Activated CD4-positive, alpha-beta memory T cell treated with anti-CD3 and anti-CD28 coated beads for 36 hours (primary cell): ENCODE measurements at regions of chr12 and their contacts with region 1.

Region 1: DNA sequence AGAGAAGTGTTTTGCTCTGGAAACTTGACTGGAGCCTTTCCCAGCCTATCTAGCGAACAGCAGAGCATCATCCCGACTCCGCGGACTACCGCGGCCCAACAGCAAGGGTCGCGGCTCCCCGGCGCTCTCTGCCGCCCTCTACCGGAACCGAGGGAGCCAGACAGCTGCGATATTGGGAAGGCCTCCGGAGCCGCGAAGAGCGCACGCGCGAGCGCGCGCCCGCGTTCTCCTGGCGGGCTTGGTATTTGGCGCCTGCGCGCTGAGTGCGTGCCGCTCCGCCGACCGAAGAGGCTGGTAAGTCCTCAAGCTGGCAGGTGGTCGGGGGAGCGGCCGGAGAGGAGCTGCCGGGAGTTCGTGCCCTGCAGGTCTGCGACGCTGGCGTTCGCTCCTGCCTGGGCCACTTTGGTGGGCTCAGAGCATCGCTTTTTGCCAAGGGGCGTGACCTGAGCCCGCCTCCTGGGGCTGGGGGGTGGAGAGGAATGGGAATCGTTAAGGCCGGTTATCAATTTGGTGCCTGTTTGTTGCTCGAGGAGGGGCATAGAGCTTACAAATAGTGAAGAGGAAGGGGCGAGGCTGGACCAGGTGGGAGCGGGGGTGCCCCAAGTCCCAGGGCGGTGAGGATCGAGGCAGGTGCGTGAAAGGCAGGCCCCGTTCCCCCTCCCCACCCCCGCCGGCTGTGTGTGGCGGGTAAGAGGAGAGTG is at the start of gene TMEM106C:
- DNase-seq: peak; percentile 94
- H3K4me3 Mint-ChIP-seq: peak within 1 kb of the TSS; percentile 98
- H3K27ac Mint-ChIP-seq: peak within 1 kb of the TSS; percentile 81
- H3K4me1 Mint-ChIP-seq: peaks cover 34% of the 10 kb centered on the region
- H3K27me3 Mint-ChIP-seq: peaks cover 5% of the 10 kb centered on the region
- total RNA-seq, gene TMEM106C: 179 to 182 TPM

Region 2: DNA sequence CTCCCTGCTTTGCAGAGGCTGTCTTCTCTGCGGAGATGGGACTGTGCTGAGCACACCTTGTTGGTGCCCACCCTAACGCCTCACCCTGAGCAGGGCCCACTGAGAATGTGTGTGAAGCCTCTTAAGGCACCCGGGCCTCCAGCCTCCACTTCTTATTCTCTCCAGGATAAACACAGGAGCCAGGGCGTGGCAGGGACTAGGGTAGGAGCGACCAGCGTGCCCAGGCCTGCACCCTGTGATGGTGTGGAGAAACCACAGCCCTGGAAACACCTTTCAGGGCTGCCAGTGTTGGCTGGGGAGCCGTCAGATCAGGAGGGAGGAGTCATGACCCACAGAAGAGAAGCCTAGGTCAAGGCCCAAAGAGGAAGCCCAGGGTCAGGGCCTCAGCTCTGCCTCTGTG is 100.0 kb before region 1 on chr12:
- CTCF ChIA-PET with region 1: interaction called, 4 read pairs
- POLR2A ChIA-PET with region 1: no interaction called
- intact Hi-C with region 1: loop called (anchors 2 kb)
- DNase-seq: no peak
- H3K4me3 Mint-ChIP-seq: no peak overlapping the region
- H3K27ac Mint-ChIP-seq: peak overlapping the region; percentile 54
- H3K4me1 Mint-ChIP-seq: peaks cover 86% of the 10 kb centered on the region
- H3K27me3 Mint-ChIP-seq: no peaks in the 10 kb centered on the region

Region 3: GRCh38 chr12:47889040-47889439 is 74.5 kb before region 1 on chr12:
- CTCF ChIA-PET with region 1: interaction called, 13 read pairs
- POLR2A ChIA-PET with region 1: interaction called, 5 read pairs
- intact Hi-C with region 1: loop called (anchors 1 kb)
- DNase-seq: peak; percentile 51
- H3K4me3 Mint-ChIP-seq: peak overlapping the region; percentile 64
- H3K27ac Mint-ChIP-seq: peak overlapping the region; percentile 86
- H3K4me1 Mint-ChIP-seq: peaks cover 86% of the 10 kb centered on the region
- H3K27me3 Mint-ChIP-seq: no peaks in the 10 kb centered on the region

Region 4: GRCh38 chr12:47949441-47950308 is 13.8 kb before region 1 on chr12:
- CTCF ChIA-PET with region 1: interaction called, 15 read pairs
- POLR2A ChIA-PET with region 1: no interaction called
- intact Hi-C with region 1: no loop called
- DNase-seq: peak; percentile 72
- H3K4me3 Mint-ChIP-seq: no peak overlapping the region
- H3K27ac Mint-ChIP-seq: no peak overlapping the region
- H3K4me1 Mint-ChIP-seq: peaks cover 5% of the 10 kb centered on the region
- H3K27me3 Mint-ChIP-seq: peaks cover 3% of the 10 kb centered on the region

Region 5: DNA sequence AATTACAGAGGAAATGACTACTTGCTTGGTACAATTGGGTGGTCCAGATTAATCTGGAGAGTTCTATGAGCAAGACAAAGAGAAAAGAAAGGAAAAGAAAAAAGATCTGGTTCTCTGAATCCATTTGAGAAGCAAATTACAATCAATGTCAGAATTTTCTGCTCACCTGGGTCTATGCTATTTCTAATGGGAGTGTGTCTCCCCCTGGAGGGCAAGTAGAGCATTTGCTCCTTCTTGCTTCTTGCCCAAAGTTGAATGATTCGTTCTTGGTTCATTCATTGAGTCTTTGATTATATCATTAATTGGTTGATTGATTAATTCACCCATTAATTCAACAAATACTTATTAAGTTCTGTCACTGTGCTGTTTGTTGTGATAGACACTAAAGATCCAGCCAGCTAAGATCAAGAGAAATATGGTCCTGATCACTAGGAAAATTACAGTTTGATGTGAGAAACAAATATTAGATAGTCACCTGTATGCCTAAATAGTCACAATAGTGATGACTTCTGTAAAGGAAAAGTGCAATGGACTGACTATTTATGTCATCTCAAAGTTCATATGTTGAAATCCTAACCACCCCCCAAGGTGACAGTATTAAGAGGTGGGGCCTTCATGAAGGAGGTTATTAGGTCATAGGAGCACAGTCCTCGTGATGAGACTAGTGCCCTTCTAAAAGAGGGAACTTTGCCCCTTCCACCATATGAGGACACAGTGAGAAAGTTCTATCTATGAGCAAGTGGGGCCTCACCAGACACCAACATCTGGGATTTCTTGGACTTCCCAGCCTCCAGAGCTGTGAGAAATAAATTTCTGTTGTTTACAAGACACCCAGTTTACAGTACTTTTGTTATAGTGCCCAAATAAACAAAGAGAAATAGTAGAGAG is 201.8 kb after region 1 on chr12:
- CTCF ChIA-PET with region 1: interaction called, 7 read pairs
- POLR2A ChIA-PET with region 1: no interaction called
- intact Hi-C with region 1: loop called (anchors 2 kb)
- DNase-seq: peak; percentile 49
- H3K4me3 Mint-ChIP-seq: no peak overlapping the region
- H3K27ac Mint-ChIP-seq: peak overlapping the region; percentile 3
- H3K4me1 Mint-ChIP-seq: no peaks in the 10 kb centered on the region
- H3K27me3 Mint-ChIP-seq: peaks cover 4% of the 10 kb centered on the region

Region 6: GRCh38 chr12:48189331-48190125 is 226.0 kb after region 1 on chr12:
- CTCF ChIA-PET with region 1: interaction called, 4 read pairs
- POLR2A ChIA-PET with region 1: no interaction called
- intact Hi-C with region 1: loop called (anchors 1 kb)
- DNase-seq: peak; percentile 79
- H3K4me3 Mint-ChIP-seq: no peak overlapping the region
- H3K27ac Mint-ChIP-seq: no peak overlapping the region
- H3K4me1 Mint-ChIP-seq: peaks cover 5% of the 10 kb centered on the region
- H3K27me3 Mint-ChIP-seq: peaks cover 26% of the 10 kb centered on the region